Activated CD8-positive, alpha-beta T cell treated with anti-CD3 and anti-CD28 coated beads for 36 hours (primary cell): ENCODE measurements at regions of chr7 and their contacts with region 1.

Region 1: GRCh38 chr7:14999331-14999730 is 96.8 kb upstream of the DGKB start:
- DNase-seq: no peak
- ATAC-seq: no peak
- H3K4me3 Mint-ChIP-seq: no peak overlapping the region
- H3K27ac Mint-ChIP-seq: no peak overlapping the region
- H3K4me1 Mint-ChIP-seq: no peaks in the 10 kb centered on the region
- H3K27me3 Mint-ChIP-seq: no peaks in the 10 kb centered on the region
- CTCF ChIP-seq: no peak

Region 2: DNA sequence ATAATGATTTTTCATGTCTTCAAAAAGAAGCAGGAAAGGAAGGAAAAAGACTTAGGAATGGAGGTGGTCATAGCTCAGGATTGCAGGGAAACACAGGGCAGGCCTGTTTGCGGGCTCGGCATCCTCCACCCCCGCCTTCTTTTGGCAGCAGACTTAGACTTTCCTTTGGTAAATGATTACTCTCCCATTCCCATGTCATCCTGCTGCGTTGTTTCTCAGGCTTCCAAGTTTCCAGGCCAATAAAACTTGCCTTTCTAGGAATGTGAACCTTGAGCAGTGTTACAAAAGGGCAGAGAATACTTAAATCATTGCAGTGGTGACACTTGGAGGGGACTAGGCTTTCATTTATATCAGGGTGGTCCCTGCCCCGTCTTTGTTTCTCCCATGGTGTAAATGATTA is 62.8 kb before region 1 on chr7:
- CTCF ChIA-PET with region 1: no interaction called
- POLR2A ChIA-PET with region 1: no interaction called
- intact Hi-C with region 1: loop called (anchors 10 kb)
- DNase-seq: no peak
- ATAC-seq: no peak
- H3K4me3 Mint-ChIP-seq: no peak overlapping the region
- H3K27ac Mint-ChIP-seq: no peak overlapping the region
- H3K4me1 Mint-ChIP-seq: no peaks in the 10 kb centered on the region
- H3K27me3 Mint-ChIP-seq: no peaks in the 10 kb centered on the region
- CTCF ChIP-seq: no peak